Pancreas (tissue), 10 donors: ENCODE measurements at regions of chr5 and their contacts with region 1.

Region 1: GRCh38 chr5:151499501-151500035 is 52.2 kb downstream of the SLC36A1 start:
- DNase-seq: no peak
- ATAC-seq: peak in 1 of 4 donors; percentile 40
- H3K4me3 ChIP-seq: no peak overlapping the region
- H3K27ac ChIP-seq: no peak overlapping the region
- H3K4me1 ChIP-seq: no peaks in the 10 kb centered on the region
- H3K27me3 ChIP-seq: no peaks in the 10 kb centered on the region
- CTCF ChIP-seq: no peak

Region 2: GRCh38 chr5:151447174-151448037 is 52.2 kb before region 1 on chr5 and contains the start of gene SLC36A1:
- intact Hi-C with region 1: loop called in 2 of 3 experiments (anchors 5 kb)
- DNase-seq: peak; percentile 89 to 97 (median 95)
- ATAC-seq: peak; percentile 97 to 99 (median 98)
- H3K4me3 ChIP-seq: peak within 1 kb of the TSS; percentile 68 to 77 (median 74)
- H3K27ac ChIP-seq: peak within 1 kb of the TSS in 2 of 4 donors; percentile 26 to 42
- H3K4me1 ChIP-seq: no peaks in the 10 kb centered on the region
- H3K27me3 ChIP-seq: no peaks in the 10 kb centered on the region
- CTCF ChIP-seq: peak; percentile 88 to 94 (median 91)
- total RNA-seq, gene SLC36A1: 5.0 to 11.3 (median 6.0) TPM